Astrocyte of the cerebellum (primary cell): ENCODE measurements at regions of chr18 and their contacts with region 1.

Region 1: DNA sequence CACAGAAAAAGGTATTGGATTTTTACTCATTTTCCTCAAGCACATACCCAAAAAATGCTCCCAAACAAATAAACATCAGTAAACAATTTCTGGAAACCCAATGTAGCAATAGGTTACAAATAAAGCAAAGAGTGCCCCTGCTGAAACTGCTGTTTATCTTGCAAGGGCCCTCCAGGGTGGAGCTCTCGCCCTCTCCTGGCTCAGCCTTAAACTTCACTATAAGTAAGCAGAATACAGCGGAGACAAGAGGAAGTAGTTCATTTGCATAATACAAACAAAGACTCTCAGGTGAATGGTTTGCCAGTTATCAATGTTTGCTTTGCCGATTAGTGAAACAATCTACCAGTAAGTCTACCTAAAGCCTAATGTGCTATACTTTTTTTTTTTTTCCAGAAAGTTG is 437.6 kb downstream of the DLGAP1 start:
- DNase-seq: no peak
- H3K4me3 ChIP-seq: no peak overlapping the region
- CTCF ChIP-seq: peak; percentile 29

Region 2: GRCh38 chr18:3903337-3903736 is 114.1 kb before region 1 on chr18:
- in situ Hi-C with region 1: no loop called
- DNase-seq: peak; percentile 82
- H3K4me3 ChIP-seq: no peak overlapping the region
- CTCF ChIP-seq: no peak

Region 3: GRCh38 chr18:3970929-3971328 is 46.6 kb before region 1 on chr18:
- in situ Hi-C with region 1: no loop called
- DNase-seq: no peak
- H3K4me3 ChIP-seq: no peak overlapping the region
- CTCF ChIP-seq: peak; percentile 15

Region 4: GRCh38 chr18:4058179-4058578 is 40.7 kb after region 1 on chr18:
- in situ Hi-C with region 1: loop called (anchors 5 kb)
- DNase-seq: no peak
- H3K4me3 ChIP-seq: no peak overlapping the region
- CTCF ChIP-seq: no peak